CD8-positive, alpha-beta memory T cell (primary cell): ENCODE measurements at regions of chr5 and their contacts with region 1.

Region 1: GRCh38 chr5:148730943-148731861 is 76.9 kb upstream of the HTR4 start:
- DNase-seq: peak; percentile 38 to 76 (median 58)
- H3K4me3 ChIP-seq: no peak overlapping the region
- H3K4me3 Mint-ChIP-seq: peak overlapping the region; percentile 59 to 89 (median 79)
- H3K27ac ChIP-seq: peak overlapping the region; percentile 10
- H3K27ac Mint-ChIP-seq: peak overlapping the region in 7 of 8 donors; percentile 23 to 83 (median 69)
- H3K4me1 ChIP-seq: no peaks in the 10 kb centered on the region
- H3K4me1 Mint-ChIP-seq: peaks cover 10 to 23% (median 18%) of the 10 kb centered on the region in 3 donors
- H3K27me3 ChIP-seq: no peaks in the 10 kb centered on the region
- H3K27me3 Mint-ChIP-seq: peaks cover 3 to 4% of the 10 kb centered on the region in 2 donors

Region 2: GRCh38 chr5:148179234-148179824 is 551.9 kb before region 1 on chr5:
- CTCF ChIA-PET with region 1: interaction called, 12 read pairs
- POLR2A ChIA-PET with region 1: no interaction called
- DNase-seq: peak in 2 of 5 donors; percentile 3 to 27
- H3K4me3 ChIP-seq: no peak overlapping the region
- H3K4me3 Mint-ChIP-seq: no peak overlapping the region
- H3K27ac ChIP-seq: no peak overlapping the region
- H3K27ac Mint-ChIP-seq: no peak overlapping the region
- H3K4me1 ChIP-seq: no peaks in the 10 kb centered on the region
- H3K4me1 Mint-ChIP-seq: no peaks in the 10 kb centered on the region
- H3K27me3 ChIP-seq: no peaks in the 10 kb centered on the region
- H3K27me3 Mint-ChIP-seq: peaks cover 5 to 11% of the 10 kb centered on the region in 2 donors

Region 3: DNA sequence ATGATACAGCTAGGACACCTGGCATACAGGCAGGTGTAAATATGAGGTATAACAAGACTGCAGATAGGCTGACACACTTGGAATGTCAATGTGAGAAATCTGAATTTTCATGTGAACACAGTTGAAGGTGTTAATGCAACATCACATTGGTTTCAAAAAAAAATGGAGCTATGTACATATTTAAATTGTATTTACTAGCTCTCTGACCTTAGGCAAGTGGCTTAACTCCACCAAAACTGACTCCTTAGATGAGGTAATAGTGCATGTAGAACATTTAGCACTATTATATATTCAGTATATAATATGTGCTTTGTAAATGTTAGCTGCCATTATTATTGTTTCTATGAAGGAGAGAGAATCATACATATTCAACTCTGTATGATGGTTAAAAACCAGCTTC is 124.9 kb before region 1 on chr5:
- CTCF ChIA-PET with region 1: no interaction called
- POLR2A ChIA-PET with region 1: no interaction called
- DNase-seq: no peak
- H3K4me3 ChIP-seq: no peak overlapping the region
- H3K4me3 Mint-ChIP-seq: no peak overlapping the region
- H3K27ac ChIP-seq: no peak overlapping the region
- H3K27ac Mint-ChIP-seq: no peak overlapping the region
- H3K4me1 ChIP-seq: no peaks in the 10 kb centered on the region
- H3K4me1 Mint-ChIP-seq: no peaks in the 10 kb centered on the region
- H3K27me3 ChIP-seq: no peaks in the 10 kb centered on the region
- H3K27me3 Mint-ChIP-seq: peaks cover 1 to 16% of the 10 kb centered on the region in 2 donors

Region 4: GRCh38 chr5:148711961-148712360 is 19.2 kb before region 1 on chr5:
- CTCF ChIA-PET with region 1: interaction called, 12 read pairs
- POLR2A ChIA-PET with region 1: no interaction called
- DNase-seq: no peak
- H3K4me3 ChIP-seq: no peak overlapping the region
- H3K4me3 Mint-ChIP-seq: no peak overlapping the region
- H3K27ac ChIP-seq: no peak overlapping the region
- H3K27ac Mint-ChIP-seq: no peak overlapping the region
- H3K4me1 ChIP-seq: no peaks in the 10 kb centered on the region
- H3K4me1 Mint-ChIP-seq: no peaks in the 10 kb centered on the region
- H3K27me3 ChIP-seq: no peaks in the 10 kb centered on the region
- H3K27me3 Mint-ChIP-seq: peaks cover 3 to 24% of the 10 kb centered on the region in 2 donors

Region 5: GRCh38 chr5:148820461-148821395 is 89.5 kb after region 1 on chr5:
- CTCF ChIA-PET with region 1: interaction called, 12 read pairs
- POLR2A ChIA-PET with region 1: no interaction called
- DNase-seq: peak in 3 of 5 donors; percentile 24 to 53 (median 31)
- H3K4me3 ChIP-seq: no peak overlapping the region
- H3K4me3 Mint-ChIP-seq: no peak overlapping the region
- H3K27ac ChIP-seq: no peak overlapping the region
- H3K27ac Mint-ChIP-seq: no peak overlapping the region
- H3K4me1 ChIP-seq: no peaks in the 10 kb centered on the region
- H3K4me1 Mint-ChIP-seq: peaks cover 12 to 18% (median 17%) of the 10 kb centered on the region in 3 donors
- H3K27me3 ChIP-seq: no peaks in the 10 kb centered on the region
- H3K27me3 Mint-ChIP-seq: peaks cover 0 to 1% of the 10 kb centered on the region in 2 donors

Region 6: GRCh38 chr5:148998174-148998797 is 267.1 kb after region 1 on chr5:
- CTCF ChIA-PET with region 1: interaction called, 108 read pairs
- POLR2A ChIA-PET with region 1: no interaction called
- DNase-seq: peak in 3 of 5 donors; percentile 21 to 39 (median 28)
- H3K4me3 ChIP-seq: no peak overlapping the region
- H3K4me3 Mint-ChIP-seq: no peak overlapping the region
- H3K27ac ChIP-seq: no peak overlapping the region
- H3K27ac Mint-ChIP-seq: no peak overlapping the region
- H3K4me1 ChIP-seq: no peaks in the 10 kb centered on the region
- H3K4me1 Mint-ChIP-seq: peaks cover 0 to 4% (median 1%) of the 10 kb centered on the region in 3 donors
- H3K27me3 ChIP-seq: peaks cover 6% of the 10 kb centered on the region
- H3K27me3 Mint-ChIP-seq: peaks cover 4 to 28% of the 10 kb centered on the region in 2 donors